ENCODE measurements at regions of chr3 and their contacts with region 1.

Region 1: DNA sequence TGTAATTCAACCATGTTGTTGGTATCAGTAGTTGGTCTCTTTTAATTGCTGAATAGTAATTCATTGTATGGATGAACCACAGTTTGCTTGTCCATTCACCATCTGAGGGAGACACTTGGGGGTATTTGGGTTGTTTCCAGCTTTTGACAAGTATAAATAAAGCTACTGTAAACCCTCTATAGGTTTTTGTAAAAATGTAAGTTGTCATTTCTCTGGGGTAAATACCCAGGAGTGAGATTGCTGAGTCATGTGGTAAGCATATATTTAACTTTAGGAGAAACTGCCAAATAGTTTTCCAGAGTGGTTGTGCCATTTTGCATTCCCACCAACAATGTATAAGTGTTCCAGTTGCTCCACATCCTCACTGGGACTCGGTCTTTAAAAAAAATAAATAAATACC is 15.4 kb upstream of the LHFPL4 start:
- DNase-seq: no peak
- H3K4me3 ChIP-seq: no peak overlapping the region
- H3K27ac ChIP-seq: no peak overlapping the region
- H3K4me1 ChIP-seq: no peaks in the 10 kb centered on the region
- H3K27me3 ChIP-seq: no peaks in the 10 kb centered on the region
- CTCF ChIP-seq: no peak
- POLR2A ChIP-seq: no peak

Region 2: DNA sequence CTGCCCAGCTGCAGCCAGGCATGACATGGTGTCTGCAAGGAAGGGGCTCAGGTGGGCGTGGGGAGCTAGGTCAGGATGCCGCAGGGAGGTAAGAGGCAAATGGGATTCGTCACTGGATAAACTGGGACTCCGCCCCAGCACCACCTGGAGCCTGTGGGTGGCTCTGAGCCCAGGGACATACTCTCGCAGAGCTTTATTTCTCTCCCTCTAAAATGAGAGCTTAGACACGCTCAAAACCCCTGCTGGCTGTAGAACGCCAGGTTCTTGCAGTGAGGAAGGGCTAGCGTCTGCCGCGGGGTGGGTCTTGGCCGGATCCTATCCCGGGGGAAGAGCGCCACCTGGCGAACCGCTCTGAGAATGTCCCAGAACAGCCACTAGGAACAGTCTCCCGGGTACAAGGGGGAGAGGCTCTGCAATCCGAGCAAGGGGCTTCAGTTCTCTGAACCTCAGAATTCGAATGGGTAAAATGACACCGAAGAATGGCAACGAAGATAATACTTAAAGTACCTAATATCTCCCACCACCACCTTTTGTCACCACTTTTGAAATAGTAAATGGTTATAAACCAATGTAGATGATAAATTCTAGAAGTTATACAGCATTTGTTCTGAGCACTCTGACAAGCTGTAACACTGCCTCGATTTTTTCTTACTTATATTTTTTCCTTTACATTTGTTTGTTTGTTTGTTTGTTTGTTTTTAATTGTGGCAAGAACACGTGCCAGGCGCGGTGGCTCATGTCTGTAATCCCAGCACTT is 266.5 kb before region 1 on chr3:
- CTCF ChIA-PET with region 1: no interaction called
- POLR2A ChIA-PET with region 1: no interaction called
- dilution Hi-C with region 1: no loop called
- intact Hi-C with region 1: no loop called
- DNase-seq: peak; percentile 79
- H3K4me3 ChIP-seq: no peak overlapping the region
- H3K27ac ChIP-seq: no peak overlapping the region
- H3K4me1 ChIP-seq: no peaks in the 10 kb centered on the region
- H3K27me3 ChIP-seq: peaks cover 0 to 4% of the 10 kb centered on the region in 2 experiments
- CTCF ChIP-seq: peak; percentile 88 to 89
- POLR2A ChIP-seq: no peak

Region 3: DNA sequence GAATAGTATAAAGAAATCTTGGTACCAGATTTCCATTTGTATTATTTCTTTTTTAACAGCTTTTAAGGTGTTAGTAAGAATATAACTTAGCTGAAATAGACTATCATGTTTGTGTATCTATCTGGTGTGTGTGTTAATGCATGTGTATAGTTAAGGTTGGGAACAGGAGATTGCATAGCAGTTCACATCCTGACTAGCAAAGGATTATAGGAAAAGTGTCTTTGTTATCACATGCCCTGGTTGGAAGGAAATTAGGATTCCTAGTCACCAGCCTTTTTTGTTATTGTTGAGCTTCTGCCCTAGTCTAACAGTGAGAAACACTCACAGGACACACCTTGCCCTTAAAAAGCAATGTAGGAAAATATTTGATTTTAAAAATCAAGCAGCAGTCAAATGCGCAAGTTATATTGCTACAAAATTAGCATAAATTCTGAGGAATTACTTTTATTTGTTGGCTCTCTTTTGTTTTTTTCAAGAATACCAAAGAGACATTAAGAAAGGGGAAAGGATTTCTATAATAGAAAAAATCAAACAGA is 113.4 kb before region 1 on chr3:
- CTCF ChIA-PET with region 1: no interaction called
- POLR2A ChIA-PET with region 1: no interaction called
- dilution Hi-C with region 1: no loop called
- intact Hi-C with region 1: no loop called
- DNase-seq: peak; percentile 52
- H3K4me3 ChIP-seq: no peak overlapping the region
- H3K27ac ChIP-seq: no peak overlapping the region
- H3K4me1 ChIP-seq: no peaks in the 10 kb centered on the region
- H3K27me3 ChIP-seq: no peaks in the 10 kb centered on the region
- CTCF ChIP-seq: no peak
- POLR2A ChIP-seq: no peak

Region 4: DNA sequence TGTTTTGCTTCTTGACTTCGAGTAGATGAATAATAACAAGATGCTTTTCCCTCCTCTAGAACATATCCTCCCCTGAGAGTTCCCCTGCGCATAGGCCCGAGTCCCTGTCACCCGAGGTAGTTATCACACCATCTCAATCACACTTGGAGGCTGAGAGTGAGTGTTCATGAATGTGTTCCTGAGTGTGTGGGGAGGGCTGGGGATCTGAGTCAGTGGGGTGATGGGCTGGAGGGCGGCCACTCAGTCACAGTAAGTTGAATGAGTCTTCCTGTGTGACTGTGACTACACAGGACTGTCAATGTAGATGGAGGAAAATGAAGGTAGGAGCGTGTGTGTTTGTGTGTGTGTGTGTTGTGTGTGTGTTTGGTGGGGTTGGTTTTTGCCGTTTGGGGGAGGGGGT is 100.6 kb before region 1 on chr3:
- CTCF ChIA-PET with region 1: no interaction called
- POLR2A ChIA-PET with region 1: no interaction called
- dilution Hi-C with region 1: no loop called
- intact Hi-C with region 1: no loop called
- DNase-seq: no peak
- H3K4me3 ChIP-seq: no peak overlapping the region
- H3K27ac ChIP-seq: no peak overlapping the region
- H3K4me1 ChIP-seq: no peaks in the 10 kb centered on the region
- H3K27me3 ChIP-seq: no peaks in the 10 kb centered on the region
- CTCF ChIP-seq: no peak
- POLR2A ChIP-seq: no peak

Region 5: DNA sequence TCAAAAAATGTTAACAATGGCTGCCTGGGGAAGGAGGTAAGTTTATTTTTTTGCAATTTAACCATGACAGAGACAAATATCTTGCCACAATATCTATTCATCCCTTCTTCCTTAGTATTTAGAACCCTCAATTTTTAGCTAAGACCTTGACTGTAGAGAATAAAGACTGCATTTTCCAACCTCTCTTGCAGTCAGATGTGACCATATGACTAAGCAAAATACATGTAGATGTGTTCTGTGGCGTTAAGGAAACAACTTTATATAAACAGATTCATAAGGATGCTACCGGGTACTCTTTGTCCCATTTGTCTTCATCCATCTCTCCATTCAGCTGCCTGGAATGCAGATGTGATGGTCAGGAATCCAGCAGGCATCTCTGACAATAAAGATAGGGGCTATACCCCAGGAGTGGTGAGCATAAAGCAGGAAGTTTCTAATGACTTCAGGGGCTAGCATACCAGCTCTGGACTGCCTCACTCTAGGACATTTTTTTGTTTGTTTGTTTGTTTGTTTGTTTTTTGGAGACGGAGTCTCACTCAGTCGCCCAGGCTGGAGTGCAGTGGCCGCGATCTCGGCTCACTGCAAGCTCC is 56.5 kb before region 1 on chr3:
- CTCF ChIA-PET with region 1: no interaction called
- POLR2A ChIA-PET with region 1: no interaction called
- dilution Hi-C with region 1: no loop called
- intact Hi-C with region 1: no loop called
- DNase-seq: no peak
- H3K4me3 ChIP-seq: no peak overlapping the region
- H3K27ac ChIP-seq: no peak overlapping the region
- H3K4me1 ChIP-seq: no peaks in the 10 kb centered on the region
- H3K27me3 ChIP-seq: peaks cover 14 to 16% of the 10 kb centered on the region in 2 experiments
- CTCF ChIP-seq: no peak
- POLR2A ChIP-seq: no peak

Region 6: DNA sequence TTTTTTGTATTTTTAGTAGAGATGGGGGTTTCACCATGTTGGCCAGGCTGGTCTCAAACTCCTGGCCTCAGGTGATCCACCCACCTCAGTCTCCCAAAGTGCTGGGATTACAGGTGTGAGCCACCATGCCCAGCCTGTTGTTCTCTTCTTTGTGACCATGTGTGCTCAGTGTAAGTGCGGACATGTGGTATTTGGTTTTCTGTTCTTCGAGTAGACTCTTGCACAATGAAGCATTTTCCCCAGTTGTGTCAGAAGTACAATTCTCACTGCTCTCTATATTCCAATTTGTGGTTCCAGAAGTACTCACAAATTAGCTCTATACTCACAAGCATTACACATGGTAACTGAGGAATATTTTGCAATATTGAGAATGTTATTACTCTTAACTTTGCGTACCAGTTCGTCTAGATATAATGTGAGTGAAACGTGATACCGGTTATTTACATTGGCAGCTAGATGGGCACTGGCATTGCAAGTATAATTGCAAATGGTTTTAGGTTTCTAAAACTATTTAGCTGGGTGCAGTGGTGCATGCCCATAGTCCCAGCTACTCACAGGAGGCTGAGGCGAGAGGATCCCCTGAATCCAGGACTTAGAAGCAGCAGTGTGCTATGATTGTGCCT is 46.1 kb after region 1 on chr3:
- CTCF ChIA-PET with region 1: no interaction called
- POLR2A ChIA-PET with region 1: no interaction called
- dilution Hi-C with region 1: no loop called
- intact Hi-C with region 1: loop called (anchors 1 kb)
- DNase-seq: no peak
- H3K4me3 ChIP-seq: no peak overlapping the region
- H3K27ac ChIP-seq: no peak overlapping the region
- H3K4me1 ChIP-seq: no peaks in the 10 kb centered on the region
- H3K27me3 ChIP-seq: no peaks in the 10 kb centered on the region
- CTCF ChIP-seq: no peak
- POLR2A ChIP-seq: no peak